ENCODE measurements at regions of chr16 and their contacts with region 1.

Region 1: DNA sequence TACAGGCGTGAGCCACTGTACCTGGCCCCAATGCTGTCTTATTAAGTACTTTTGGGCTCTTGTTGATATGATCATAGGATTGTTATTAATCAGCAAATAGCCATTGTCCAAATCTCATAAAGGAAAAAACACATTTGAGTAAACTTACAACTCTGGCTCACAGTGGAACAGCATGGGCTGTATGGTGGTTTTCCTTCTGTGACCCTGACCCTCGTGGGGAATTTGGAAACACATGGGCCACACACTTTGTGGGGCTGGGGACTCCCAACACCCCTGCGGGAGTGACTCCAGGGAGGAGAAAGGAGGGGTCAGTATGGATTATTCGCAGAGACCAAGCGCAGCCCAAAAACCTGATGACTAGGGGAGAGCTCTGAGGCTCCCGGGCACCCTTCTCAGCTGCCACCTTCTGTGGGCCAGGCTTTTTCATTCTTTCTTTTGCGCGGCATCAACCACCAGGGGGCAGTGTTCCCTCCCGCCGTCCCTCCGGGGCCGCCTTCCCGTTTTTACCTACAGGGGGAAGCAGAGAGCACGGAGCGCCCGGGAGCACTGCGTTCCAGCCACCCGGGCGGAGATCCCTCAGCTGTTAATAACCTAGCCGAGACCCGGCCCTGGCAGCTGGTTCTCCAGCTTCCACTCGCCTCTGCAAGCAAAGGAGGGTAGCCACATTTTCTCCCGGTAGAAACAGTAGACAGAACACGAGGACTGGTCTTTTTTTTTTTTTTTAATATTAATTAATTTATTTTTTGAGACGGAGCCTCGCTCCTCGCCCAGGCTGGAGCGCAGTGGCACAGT is 9.7 kb downstream of the TSNAXIP1 start:
- DNase-seq: peak; percentile 57
- H3K4me3 ChIP-seq: no peak overlapping the region
- H3K27ac ChIP-seq: no peak overlapping the region
- H3K4me1 ChIP-seq: no peaks in the 10 kb centered on the region
- H3K27me3 ChIP-seq: no peaks in the 10 kb centered on the region
- CTCF ChIP-seq: peak; percentile 99 to 100

Region 2: DNA sequence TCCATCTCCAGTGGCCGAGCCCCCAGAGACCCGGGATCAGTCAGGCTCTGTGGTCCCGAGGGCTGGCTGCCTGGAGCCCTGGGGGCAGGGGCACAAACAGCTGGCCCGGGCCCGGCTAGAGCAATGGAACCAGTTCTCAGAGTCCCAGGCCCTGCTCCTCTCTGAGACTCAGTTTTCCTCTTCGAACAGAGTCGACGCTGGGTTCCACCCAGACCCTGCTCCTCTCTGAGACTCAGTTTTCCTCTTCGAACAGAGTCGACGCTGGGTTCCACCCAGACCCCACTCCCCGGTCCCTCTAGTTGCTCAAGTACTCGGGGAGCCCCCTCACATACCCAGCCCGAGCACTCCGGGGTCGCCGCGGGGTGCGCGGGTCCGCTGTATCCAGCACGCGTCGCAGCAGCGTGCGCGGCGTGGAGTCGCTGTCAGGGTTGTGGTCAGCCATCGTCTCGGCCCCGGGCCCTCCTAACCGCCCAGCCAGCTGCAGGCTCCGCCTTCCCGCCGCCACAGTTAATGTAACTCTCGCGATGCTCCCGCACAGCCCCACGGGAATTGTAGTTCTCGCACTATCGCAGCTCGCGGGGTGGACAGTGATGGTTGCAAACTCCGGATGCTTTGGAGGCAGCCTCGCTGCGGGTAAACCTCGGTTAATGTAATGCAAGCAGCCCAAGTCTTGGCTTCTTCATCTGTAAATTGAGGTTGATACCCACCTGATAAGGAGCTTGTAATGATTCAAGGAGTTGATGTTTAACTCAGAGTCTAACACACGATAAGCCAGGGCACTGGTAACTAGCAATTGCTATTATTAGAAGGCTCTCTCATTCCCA is 17.2 kb after region 1 on chr16:
- CTCF ChIA-PET with region 1: interaction called, 8 read pairs
- dilution Hi-C with region 1: no loop called
- in situ Hi-C with region 1: no loop called
- intact Hi-C with region 1: loop called (anchors 2 kb)
- DNase-seq: peak; percentile 78
- H3K4me3 ChIP-seq: peak overlapping the region; percentile 52 to 94 (median 70)
- H3K27ac ChIP-seq: peak overlapping the region; percentile 67
- H3K4me1 ChIP-seq: peaks cover 8% of the 10 kb centered on the region
- H3K27me3 ChIP-seq: no peaks in the 10 kb centered on the region
- CTCF ChIP-seq: no peak

Region 3: GRCh38 chr16:67841764-67842508 is 25.5 kb after region 1 on chr16 and contains the start of gene THAP11:
- CTCF ChIA-PET with region 1: interaction called, 9 read pairs
- dilution Hi-C with region 1: no loop called
- in situ Hi-C with region 1: no loop called
- intact Hi-C with region 1: loop called (anchors 1 kb)
- DNase-seq: peak; percentile 90
- H3K4me3 ChIP-seq: peak within 1 kb of the TSS; percentile 60 to 80 (median 74)
- H3K27ac ChIP-seq: peak within 1 kb of the TSS; percentile 77
- H3K4me1 ChIP-seq: peaks cover 34% of the 10 kb centered on the region
- H3K27me3 ChIP-seq: no peaks in the 10 kb centered on the region
- CTCF ChIP-seq: peak; percentile 85 to 89
- total RNA-seq, gene THAP11: 11.7 to 13.1 TPM

Region 4: GRCh38 chr16:67865316-67865715 is 48.9 kb after region 1 on chr16:
- CTCF ChIA-PET with region 1: interaction called, 18 read pairs
- dilution Hi-C with region 1: loop called (anchors 5 kb)
- in situ Hi-C with region 1: no loop called
- intact Hi-C with region 1: loop called (anchors 1 kb)
- DNase-seq: peak; percentile 34
- H3K4me3 ChIP-seq: no peak overlapping the region
- H3K27ac ChIP-seq: no peak overlapping the region
- H3K4me1 ChIP-seq: peaks cover 22% of the 10 kb centered on the region
- H3K27me3 ChIP-seq: no peaks in the 10 kb centered on the region
- CTCF ChIP-seq: peak; percentile 34 to 65

Region 5: DNA sequence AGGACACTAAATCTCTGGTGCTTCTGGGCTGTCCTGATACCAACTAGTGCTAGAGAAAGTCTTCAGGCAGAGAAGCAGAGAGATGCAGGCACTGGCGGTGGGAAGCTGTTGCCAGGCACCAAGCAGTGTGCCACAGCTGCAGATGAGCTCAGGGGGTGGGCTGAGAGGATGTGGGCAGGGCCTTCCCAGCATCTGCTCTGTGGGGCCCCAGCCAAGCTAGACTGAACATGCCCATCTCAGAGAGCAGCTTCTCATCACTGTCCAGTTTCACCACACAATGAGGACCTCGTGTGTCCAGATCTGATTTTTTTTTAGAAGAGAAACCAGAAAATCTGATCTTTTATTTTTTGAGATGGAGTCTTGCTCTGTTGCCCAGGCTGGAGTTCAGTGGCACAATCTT is 93.7 kb after region 1 on chr16:
- CTCF ChIA-PET with region 1: no interaction called
- dilution Hi-C with region 1: loop called (anchors 5 kb)
- in situ Hi-C with region 1: no loop called
- intact Hi-C with region 1: loop called (anchors 1 kb)
- DNase-seq: peak; percentile 81
- H3K4me3 ChIP-seq: no peak overlapping the region
- H3K27ac ChIP-seq: peak overlapping the region; percentile 22
- H3K4me1 ChIP-seq: peaks cover 11% of the 10 kb centered on the region
- H3K27me3 ChIP-seq: no peaks in the 10 kb centered on the region
- CTCF ChIP-seq: no peak

Region 6: GRCh38 chr16:67928561-67929364 is 112.3 kb after region 1 on chr16:
- CTCF ChIA-PET with region 1: no interaction called
- dilution Hi-C with region 1: no loop called
- in situ Hi-C with region 1: loop called (anchors 5 to 10 kb)
- intact Hi-C with region 1: loop called (anchors 1 kb)
- DNase-seq: peak; percentile 49
- H3K4me3 ChIP-seq: no peak overlapping the region
- H3K27ac ChIP-seq: no peak overlapping the region
- H3K4me1 ChIP-seq: no peaks in the 10 kb centered on the region
- H3K27me3 ChIP-seq: no peaks in the 10 kb centered on the region
- CTCF ChIP-seq: peak; percentile 94 to 95

Region 7: GRCh38 chr16:68064791-68065365 is 248.4 kb after region 1 on chr16:
- CTCF ChIA-PET with region 1: no interaction called
- dilution Hi-C with region 1: no loop called
- in situ Hi-C with region 1: no loop called
- intact Hi-C with region 1: loop called (anchors 1 kb)
- DNase-seq: peak; percentile 56
- H3K4me3 ChIP-seq: no peak overlapping the region
- H3K27ac ChIP-seq: no peak overlapping the region
- H3K4me1 ChIP-seq: peaks cover 6% of the 10 kb centered on the region
- H3K27me3 ChIP-seq: no peaks in the 10 kb centered on the region
- CTCF ChIP-seq: peak; percentile 88 to 90

Measured in mammary epithelial cell (primary cell).